ENCODE measurements at regions of chr12 and their contacts with region 1.

Region 1: DNA sequence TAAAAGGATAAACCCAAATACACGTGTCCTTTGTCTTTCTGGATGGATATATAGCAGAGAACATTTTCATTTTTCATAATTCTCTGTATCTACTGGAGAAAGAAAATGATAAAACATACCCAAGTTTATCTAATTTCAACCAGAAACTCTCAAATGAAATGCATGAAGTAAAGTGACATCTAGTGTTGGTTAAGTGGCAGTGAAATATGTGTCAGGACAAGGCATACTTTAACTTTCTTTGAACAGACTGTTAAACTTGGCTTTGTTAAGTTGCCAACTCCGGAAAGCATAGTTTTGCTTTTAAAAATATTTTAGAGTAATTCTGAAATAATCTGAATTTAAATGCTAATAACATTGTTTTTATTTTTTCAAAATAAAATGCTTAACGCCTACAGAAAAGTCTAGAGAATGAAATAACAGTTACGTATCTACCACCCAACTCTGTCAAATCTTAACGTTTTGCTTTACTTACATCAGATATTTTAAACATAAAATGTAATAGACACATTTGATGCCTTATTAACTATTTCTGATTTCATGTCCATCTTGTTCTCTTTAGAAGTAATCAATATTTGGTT is 25.2 kb upstream of the NTN4 start:
- DNase-seq: no peak

Region 2: DNA sequence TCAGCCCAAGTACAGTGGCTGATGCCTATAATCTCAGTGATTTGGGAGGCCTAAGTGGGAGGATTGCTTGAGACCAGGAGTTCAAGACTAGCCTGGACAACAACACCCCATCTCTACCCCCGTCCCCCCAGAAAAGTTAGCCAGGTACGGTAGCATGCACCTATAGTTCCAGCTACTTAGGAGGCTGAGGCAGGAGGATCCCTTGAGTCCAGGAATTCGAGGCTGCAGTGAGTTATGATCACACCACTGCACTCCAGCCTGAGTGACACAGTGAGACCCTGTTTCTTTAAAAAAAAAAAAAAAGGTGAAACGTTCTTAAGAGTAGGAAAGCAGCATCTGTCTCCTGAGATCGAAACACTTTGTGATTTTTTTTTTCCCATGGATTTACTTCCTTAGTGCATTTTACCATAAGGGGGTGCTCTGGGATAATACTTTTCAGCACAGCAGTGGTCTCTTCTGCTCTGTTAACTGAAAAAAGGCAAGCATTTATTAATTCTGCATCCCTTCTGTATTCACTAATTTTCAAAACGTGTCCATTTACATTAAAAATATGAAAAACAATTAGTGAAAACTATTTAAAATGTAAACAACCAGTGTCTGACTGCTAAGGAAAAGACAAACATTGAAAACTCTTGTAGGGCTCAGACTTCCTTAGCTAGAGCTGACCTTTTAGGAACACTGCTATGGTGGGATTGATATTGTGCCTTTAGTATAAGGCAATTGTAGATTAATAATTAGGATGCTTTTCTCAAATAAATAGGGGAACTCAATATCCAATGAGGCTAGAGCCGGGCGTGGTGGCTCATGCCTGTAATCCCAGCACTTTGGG is 233.3 kb before region 1 on chr12:
- intact Hi-C with region 1: loop called (anchors 2 kb)
- DNase-seq: no peak

Region 3: DNA sequence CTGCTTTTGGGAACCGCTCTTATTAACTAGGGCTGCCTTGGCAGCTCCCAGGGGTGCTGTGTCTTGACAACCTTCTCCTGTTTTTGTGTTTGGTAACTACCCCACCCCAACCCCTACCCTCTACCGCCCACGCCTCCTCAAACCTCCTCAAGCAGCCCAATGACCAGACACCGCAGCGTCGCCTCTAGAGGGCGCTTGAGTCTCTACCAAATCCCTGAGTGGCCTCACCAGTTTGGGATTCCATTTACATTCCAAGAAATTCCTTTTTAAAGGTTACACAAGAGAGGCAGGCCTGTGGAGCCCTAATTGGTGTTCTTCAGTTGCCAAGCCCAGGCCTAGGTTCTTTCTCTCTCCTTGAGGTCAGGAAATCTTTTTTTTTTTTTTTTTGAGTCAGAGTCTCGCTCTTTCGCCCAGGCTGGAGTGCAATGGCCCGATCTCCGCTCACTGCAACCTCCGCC is 192.1 kb before region 1 on chr12:
- intact Hi-C with region 1: loop called (anchors 1 kb)
- DNase-seq: peak in 7 of 10 donors; percentile 19 to 88 (median 35)

Measured in posterior cingulate gyrus (tissue), 11 donors.